Left colon (tissue), 2 donors: ENCODE measurements at regions of chr20 and their contacts with region 1.

Region 1: GRCh38 chr20:2523919-2524708 is 12.3 kb upstream of the TMC2 start:
- DNase-seq: peak; percentile 79 to 90
- ATAC-seq: peak; percentile 84

Region 2: GRCh38 chr20:2469991-2470422 is 54.1 kb before region 1 on chr20:
- intact Hi-C with region 1: loop called in 1 of 2 experiments (anchors 5 kb)
- DNase-seq: peak; percentile 44 to 46
- ATAC-seq: peak; percentile 62

Region 3: DNA sequence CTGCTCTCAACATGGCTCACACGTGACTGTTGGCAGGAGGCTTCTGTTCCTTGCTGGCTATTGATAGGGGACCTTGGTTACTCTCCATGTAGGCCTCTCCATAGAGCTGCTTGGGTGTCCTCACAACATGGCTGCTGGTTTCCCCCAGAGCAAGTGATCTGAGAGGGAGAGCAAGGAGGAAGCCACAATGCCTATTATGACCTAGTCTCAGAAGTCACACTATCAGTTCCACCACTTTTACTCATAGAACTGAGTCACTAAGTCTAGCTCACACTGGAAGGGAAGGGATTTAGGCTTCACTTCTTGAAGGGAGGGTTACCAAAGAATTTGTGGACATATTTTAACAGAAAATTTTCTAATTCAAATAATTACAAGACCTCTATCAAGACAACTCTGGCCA is 119.6 kb after region 1 on chr20:
- intact Hi-C with region 1: loop called in 1 of 2 experiments (anchors 10 kb)
- DNase-seq: no peak
- ATAC-seq: no peak

Region 4: DNA sequence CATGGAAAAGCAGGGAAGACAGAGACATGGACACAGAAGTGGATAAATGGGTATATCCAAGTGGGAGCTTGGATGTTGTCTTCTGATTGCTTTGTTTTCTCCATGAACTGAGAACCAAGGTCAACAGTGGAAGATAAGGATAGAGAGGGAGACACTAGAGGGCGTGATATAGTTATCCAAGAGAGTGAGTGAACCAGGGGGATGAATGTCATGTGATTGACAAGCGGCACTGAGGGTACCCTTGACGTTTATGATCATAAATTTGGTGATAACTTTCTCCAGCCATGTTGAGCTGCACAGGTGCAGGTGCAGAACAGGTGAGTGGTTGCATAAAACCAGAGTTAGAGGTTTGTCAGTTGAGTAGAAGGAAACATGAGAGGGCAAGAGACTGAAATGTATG is 189.2 kb after region 1 on chr20:
- intact Hi-C with region 1: no loop called
- DNase-seq: no peak
- ATAC-seq: peak; percentile 49